Activated naive CD8-positive, alpha-beta T cell treated with anti-CD3 and anti-CD28 coated beads, Interleukin-2, amount 10 ng/mL, durations not matched to agents 7 days and 5 days (primary cell): ENCODE measurements at regions of chr10 and their contacts with region 1.

Region 1: GRCh38 chr10:125822878-125823662 is at the starts of genes BCCIP and UROS:
- DNase-seq: peak; percentile 92
- ATAC-seq: peak; percentile 89
- H3K4me3 Mint-ChIP-seq: peak within 1 kb of the TSS; percentile 80
- H3K27ac Mint-ChIP-seq: peak within 1 kb of the TSS; percentile 81
- H3K4me1 Mint-ChIP-seq: peaks cover 21% of the 10 kb centered on the region
- H3K27me3 Mint-ChIP-seq: no peaks in the 10 kb centered on the region
- total RNA-seq, gene BCCIP: 44.3 to 44.9 TPM
- total RNA-seq, gene UROS: 45.4 to 45.9 TPM

Region 2: DNA sequence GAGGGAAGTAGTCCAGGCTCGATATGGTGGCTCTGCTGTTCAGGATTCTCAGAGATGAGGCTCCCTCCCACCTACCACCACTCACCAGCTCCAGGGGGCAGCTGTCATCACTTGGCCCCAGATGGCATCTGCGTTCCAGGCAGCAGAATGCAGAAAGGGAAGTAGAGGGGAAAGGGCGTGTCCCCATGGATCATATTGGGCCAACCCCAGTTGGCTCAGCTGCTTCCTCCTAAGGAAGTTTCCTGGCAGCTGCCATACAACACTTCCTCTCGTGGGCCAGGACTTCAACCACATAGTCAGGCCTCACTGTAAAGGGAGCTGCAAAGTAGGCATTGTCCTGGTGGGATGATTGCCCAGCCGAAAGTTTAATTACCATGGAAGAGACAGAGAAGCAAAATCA is 138.5 kb before region 1 on chr10:
- POLR2A ChIA-PET with region 1: no interaction called
- DNase-seq: no peak
- ATAC-seq: no peak
- H3K4me3 Mint-ChIP-seq: no peak overlapping the region
- H3K27ac Mint-ChIP-seq: no peak overlapping the region
- H3K4me1 Mint-ChIP-seq: no peaks in the 10 kb centered on the region
- H3K27me3 Mint-ChIP-seq: peaks cover 5% of the 10 kb centered on the region

Region 3: GRCh38 chr10:125719146-125720001 is 103.7 kb before region 1 on chr10 and contains the start of gene EDRF1:
- POLR2A ChIA-PET with region 1: interaction called, 20 read pairs
- DNase-seq: peak; percentile 98
- ATAC-seq: peak; percentile 96
- H3K4me3 Mint-ChIP-seq: peak within 1 kb of the TSS; percentile 98
- H3K27ac Mint-ChIP-seq: peak within 1 kb of the TSS; percentile 99
- H3K4me1 Mint-ChIP-seq: peaks cover 23% of the 10 kb centered on the region
- H3K27me3 Mint-ChIP-seq: no peaks in the 10 kb centered on the region
- total RNA-seq, gene EDRF1: 43.9 to 45.8 TPM

Region 4: GRCh38 chr10:125788156-125789034 is 34.7 kb before region 1 on chr10:
- POLR2A ChIA-PET with region 1: interaction called, 10 read pairs
- DNase-seq: peak; percentile 45
- ATAC-seq: peak; percentile 93
- H3K4me3 Mint-ChIP-seq: peak overlapping the region; percentile 51
- H3K27ac Mint-ChIP-seq: peak overlapping the region; percentile 80
- H3K4me1 Mint-ChIP-seq: peaks cover 15% of the 10 kb centered on the region
- H3K27me3 Mint-ChIP-seq: no peaks in the 10 kb centered on the region

Region 5: GRCh38 chr10:125868372-125868975 is 45.4 kb after region 1 on chr10:
- POLR2A ChIA-PET with region 1: no interaction called
- DNase-seq: no peak
- ATAC-seq: no peak
- H3K4me3 Mint-ChIP-seq: no peak overlapping the region
- H3K27ac Mint-ChIP-seq: no peak overlapping the region
- H3K4me1 Mint-ChIP-seq: no peaks in the 10 kb centered on the region
- H3K27me3 Mint-ChIP-seq: no peaks in the 10 kb centered on the region